HEK293T (cell line): ENCODE measurements at regions of chr13 and their contacts with region 1.

Region 1: GRCh38 chr13:75635828-75636435 is at the start of gene LMO7:
- DNase-seq: peak; percentile 89

Region 2: GRCh38 chr13:75647126-75647784 is 11.3 kb after region 1 on chr13:
- CTCF ChIA-PET with region 1: no interaction called
- POLR2A ChIA-PET with region 1: no interaction called
- DNase-seq: no peak

Region 3: GRCh38 chr13:76980075-76980718 is 1344.3 kb after region 1 on chr13:
- CTCF ChIA-PET with region 1: interaction called, 11 read pairs
- POLR2A ChIA-PET with region 1: no interaction called
- DNase-seq: peak; percentile 100